Mammary epithelial cell (primary cell): ENCODE measurements at regions of chr5 and their contacts with region 1.

Region 1: GRCh38 chr5:151771259-151772028 is at the start of gene G3BP1:
- DNase-seq: peak; percentile 100
- H3K4me3 ChIP-seq: peak within 1 kb of the TSS; percentile 63 to 93 (median 80)
- H3K27ac ChIP-seq: peak within 1 kb of the TSS; percentile 84
- H3K4me1 ChIP-seq: peaks cover 26% of the 10 kb centered on the region
- H3K27me3 ChIP-seq: no peaks in the 10 kb centered on the region
- CTCF ChIP-seq: peak; percentile 36 to 77
- total RNA-seq, gene G3BP1: 193 to 252 TPM

Region 2: GRCh38 chr5:151758430-151759241 is 12.8 kb before region 1 on chr5 and contains the start of gene ATOX1:
- CTCF ChIA-PET with region 1: no interaction called
- dilution Hi-C with region 1: no loop called
- in situ Hi-C with region 1: no loop called
- intact Hi-C with region 1: loop called (anchors 1 kb)
- DNase-seq: peak; percentile 87
- H3K4me3 ChIP-seq: peak within 1 kb of the TSS; percentile 80 to 86 (median 83)
- H3K27ac ChIP-seq: peak within 1 kb of the TSS; percentile 23
- H3K4me1 ChIP-seq: peaks cover 22% of the 10 kb centered on the region
- H3K27me3 ChIP-seq: no peaks in the 10 kb centered on the region
- CTCF ChIP-seq: no peak
- total RNA-seq, gene ATOX1: 27.0 to 89.2 TPM